Endothelial cell of umbilical vein (primary cell): ENCODE measurements at regions of chr7 and their contacts with region 1.

Region 1: GRCh38 chr7:139075031-139075652 is 34.4 kb downstream of the ZC3HAV1 start:
- DNase-seq: peak; percentile 81
- H3K4me3 ChIP-seq: no peak overlapping the region
- H3K27ac ChIP-seq: peak overlapping the region; percentile 61
- H3K4me1 ChIP-seq: peaks cover 7% of the 10 kb centered on the region
- H3K27me3 ChIP-seq: no peaks in the 10 kb centered on the region
- CTCF ChIP-seq: peak; percentile 65 to 74
- POLR2A ChIP-seq: no peak

Region 2: GRCh38 chr7:138785587-138786437 is 289.3 kb before region 1 on chr7:
- CTCF ChIA-PET with region 1: no interaction called
- POLR2A ChIA-PET with region 1: no interaction called
- dilution Hi-C with region 1: no loop called
- intact Hi-C with region 1: no loop called
- DNase-seq: no peak
- H3K4me3 ChIP-seq: no peak overlapping the region
- H3K27ac ChIP-seq: no peak overlapping the region
- H3K4me1 ChIP-seq: no peaks in the 10 kb centered on the region
- H3K27me3 ChIP-seq: no peaks in the 10 kb centered on the region
- CTCF ChIP-seq: no peak
- POLR2A ChIP-seq: no peak

Region 3: DNA sequence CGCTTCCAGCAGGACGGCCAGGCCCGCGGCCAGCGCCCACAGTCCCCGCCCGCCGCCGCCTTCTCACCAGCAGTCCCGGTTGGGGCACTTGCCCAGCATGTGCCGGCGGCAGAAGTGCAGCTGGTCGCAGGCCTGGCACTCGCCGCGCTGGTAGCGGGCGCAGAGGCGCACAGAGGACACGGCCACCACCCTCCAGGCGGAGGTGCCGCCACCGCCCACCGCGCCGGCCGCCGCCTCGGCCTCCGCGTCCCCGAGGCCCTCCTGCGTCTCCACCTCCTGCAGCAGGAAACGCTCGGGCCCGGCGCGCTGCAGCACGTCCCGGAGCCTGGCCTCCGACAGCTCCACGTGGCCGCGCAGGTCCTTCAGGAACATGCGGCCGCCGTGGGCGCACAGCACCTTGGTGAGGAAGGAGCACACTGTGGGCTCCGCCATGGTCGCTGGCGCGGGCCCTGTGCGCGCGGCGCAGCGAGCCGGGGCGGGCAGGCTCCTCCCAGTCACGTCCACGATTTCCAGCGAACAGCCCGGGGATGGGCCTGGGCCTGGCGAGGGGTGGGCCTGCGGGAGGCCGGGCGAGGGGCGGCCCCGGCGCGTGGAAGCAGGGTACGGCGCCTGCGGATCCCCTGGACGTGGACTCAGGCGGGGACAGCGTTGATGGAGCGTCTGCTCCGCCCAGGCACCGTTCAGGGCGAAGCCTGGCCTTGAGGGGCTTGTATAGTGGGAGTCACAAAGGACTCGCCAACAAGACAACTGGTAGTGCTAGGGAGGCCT is 39.4 kb before region 1 on chr7 and contains the start of gene ZC3HAV1L:
- CTCF ChIA-PET with region 1: interaction called, 14 read pairs
- POLR2A ChIA-PET with region 1: no interaction called
- dilution Hi-C with region 1: no loop called
- intact Hi-C with region 1: loop called (anchors 1 kb)
- DNase-seq: peak; percentile 84
- H3K4me3 ChIP-seq: peak within 1 kb of the TSS; percentile 35 to 85 (median 63)
- H3K27ac ChIP-seq: peak within 1 kb of the TSS; percentile 20
- H3K4me1 ChIP-seq: peaks cover 10% of the 10 kb centered on the region
- H3K27me3 ChIP-seq: no peaks in the 10 kb centered on the region
- CTCF ChIP-seq: no peak
- POLR2A ChIP-seq: peak; percentile 92
- total RNA-seq, gene ZC3HAV1L: 23.8 and 25.7 TPM in 2 replicates

Region 4: GRCh38 chr7:139058943-139059342 is 16.2 kb before region 1 on chr7:
- CTCF ChIA-PET with region 1: interaction called, 29 read pairs
- POLR2A ChIA-PET with region 1: no interaction called
- dilution Hi-C with region 1: no loop called
- intact Hi-C with region 1: loop called (anchors 1 kb)
- DNase-seq: peak; percentile 81
- H3K4me3 ChIP-seq: no peak overlapping the region
- H3K27ac ChIP-seq: peak overlapping the region; percentile 67
- H3K4me1 ChIP-seq: peaks cover 23% of the 10 kb centered on the region
- H3K27me3 ChIP-seq: no peaks in the 10 kb centered on the region
- CTCF ChIP-seq: no peak
- POLR2A ChIP-seq: no peak

Region 5: DNA sequence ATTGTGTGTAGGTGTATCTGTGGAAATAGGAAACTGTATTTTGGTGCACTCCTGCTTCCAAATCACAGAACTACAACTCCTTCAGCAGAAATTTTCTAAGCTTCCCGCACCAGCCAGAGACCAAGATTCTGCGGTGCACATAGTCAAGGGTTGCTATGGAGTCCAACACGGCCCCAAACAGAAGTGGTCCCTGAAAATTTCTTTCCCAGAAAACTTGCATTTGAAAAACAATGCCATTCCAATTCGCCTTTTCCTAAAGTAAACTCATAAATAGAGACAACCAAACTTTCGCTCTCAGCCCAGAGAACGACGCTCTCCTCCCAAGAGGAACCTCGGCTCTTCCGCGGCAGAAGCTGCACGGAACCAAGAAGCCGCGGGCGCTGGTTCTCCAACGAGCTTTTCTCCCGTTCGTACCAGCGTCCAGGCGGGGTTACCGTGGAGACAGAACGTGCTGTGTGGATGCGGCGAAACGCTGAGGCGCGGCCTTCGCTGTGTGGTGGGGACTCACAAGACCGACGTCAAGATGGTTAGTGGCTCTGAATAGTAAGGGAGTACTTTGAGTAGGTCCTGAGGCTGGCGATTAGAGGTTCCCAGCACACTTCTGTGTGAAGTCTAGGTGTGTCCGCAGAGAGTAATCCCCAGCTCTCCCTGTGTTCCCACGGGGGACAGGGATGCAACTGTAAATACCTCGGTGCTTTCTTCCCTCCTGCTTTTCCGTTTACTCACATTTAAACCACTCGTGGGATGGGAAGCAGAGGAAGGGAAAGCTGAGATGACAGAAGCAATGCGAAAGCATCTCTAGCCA is 58.4 kb after region 1 on chr7:
- CTCF ChIA-PET with region 1: interaction called, 11 read pairs
- POLR2A ChIA-PET with region 1: no interaction called
- dilution Hi-C with region 1: no loop called
- intact Hi-C with region 1: no loop called
- DNase-seq: peak; percentile 94
- H3K4me3 ChIP-seq: peak overlapping the region; percentile 54 to 87 (median 66)
- H3K27ac ChIP-seq: peak overlapping the region; percentile 41
- H3K4me1 ChIP-seq: peaks cover 4% of the 10 kb centered on the region
- H3K27me3 ChIP-seq: peaks cover 0 to under 1% of the 10 kb centered on the region in 2 experiments
- CTCF ChIP-seq: no peak
- POLR2A ChIP-seq: peak; percentile 66